CD14-positive monocyte (primary cell): ENCODE measurements at regions of chr5 and their contacts with region 1.

Region 1: DNA sequence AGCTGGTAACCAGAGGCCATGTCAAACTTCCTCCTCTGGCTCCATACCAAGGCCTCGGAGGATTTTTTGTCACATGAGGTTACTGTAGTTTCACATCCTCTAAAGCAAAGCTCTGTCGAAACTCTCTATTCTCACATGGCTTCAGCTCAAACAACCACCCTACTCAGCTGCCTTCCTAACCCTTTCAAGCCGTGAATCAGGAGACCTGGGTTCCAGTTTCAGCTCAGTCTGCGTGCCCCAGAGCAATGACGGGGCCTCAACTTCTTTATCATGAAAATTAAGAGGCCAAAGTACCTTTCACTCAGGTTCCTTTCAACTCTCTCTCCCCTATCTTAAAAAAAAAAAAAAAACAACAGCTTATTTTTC is 145.2 kb upstream of the MAP3K1 start:
- DNase-seq: peak; percentile 97 to 98 (median 97)
- H3K4me3 ChIP-seq: peak overlapping the region in 1 of 3 experiments; percentile 31
- H3K4me3 Mint-ChIP-seq: peak overlapping the region in 1 of 2 donors; percentile 42
- H3K27ac ChIP-seq: peak overlapping the region; percentile 92 to 93
- H3K27ac Mint-ChIP-seq: peak overlapping the region; percentile 95 to 98 (median 97)
- H3K4me1 ChIP-seq: peaks cover 92 to 94% of the 10 kb centered on the region in 2 donors
- H3K4me1 Mint-ChIP-seq: peaks cover 89% of the 10 kb centered on the region
- H3K27me3 ChIP-seq: no peaks in the 10 kb centered on the region
- H3K27me3 Mint-ChIP-seq: peaks cover 0 to 7% (median 0%) of the 10 kb centered on the region in 3 donors
- CTCF ChIP-seq: no peak

Region 2: DNA sequence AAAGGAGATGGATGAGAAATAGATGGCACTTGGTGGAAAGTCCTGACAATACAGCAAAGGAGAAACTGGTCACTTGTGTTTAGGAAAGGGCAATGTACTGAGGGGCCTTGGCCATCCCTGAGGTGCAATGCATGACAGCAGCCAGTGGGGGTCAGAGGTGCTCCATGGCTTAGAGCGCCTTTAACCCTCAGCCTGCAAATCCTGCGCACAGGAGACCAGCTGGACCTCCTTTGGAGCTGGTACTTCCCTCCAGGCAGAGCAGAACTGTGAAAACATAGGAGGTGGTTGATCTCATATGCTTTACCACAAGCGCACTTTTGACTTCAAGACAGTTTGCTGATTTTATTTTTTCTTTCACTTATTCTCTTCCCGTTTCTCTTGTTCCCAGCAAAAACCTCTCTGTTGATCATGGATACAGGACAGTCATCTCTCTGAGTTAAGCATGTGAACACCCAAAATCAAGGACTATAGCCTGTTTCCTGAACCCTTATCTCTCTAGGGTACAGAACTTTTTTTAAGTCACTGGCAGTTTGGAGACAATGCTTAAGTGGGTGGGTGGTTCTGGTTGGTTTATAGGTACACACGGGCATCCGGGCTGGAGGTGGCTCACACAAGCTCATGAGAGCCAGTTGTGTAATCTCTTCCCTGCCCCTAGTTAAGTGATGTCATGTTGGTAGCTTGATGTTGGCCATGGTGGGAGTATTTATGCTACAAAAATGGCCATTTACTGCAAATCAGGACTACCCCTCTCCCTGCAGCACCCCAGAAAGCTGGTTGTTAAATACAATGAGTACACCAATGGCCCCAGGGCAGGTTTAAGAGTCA is 399.3 kb before region 1 on chr5:
- intact Hi-C with region 1: loop called in 1 of 2 experiments (anchors 10 kb)
- DNase-seq: peak; percentile 79 to 83 (median 82)
- H3K4me3 ChIP-seq: no peak overlapping the region
- H3K4me3 Mint-ChIP-seq: peak overlapping the region; percentile 32 to 75
- H3K27ac ChIP-seq: no peak overlapping the region
- H3K27ac Mint-ChIP-seq: peak overlapping the region; percentile 23 to 81 (median 62)
- H3K4me1 ChIP-seq: peaks cover 14 to 16% of the 10 kb centered on the region in 2 donors
- H3K4me1 Mint-ChIP-seq: peaks cover 24% of the 10 kb centered on the region
- H3K27me3 ChIP-seq: no peaks in the 10 kb centered on the region
- H3K27me3 Mint-ChIP-seq: peaks cover 0 to 3% (median 0%) of the 10 kb centered on the region in 3 donors
- CTCF ChIP-seq: peak; percentile 98

Region 3: DNA sequence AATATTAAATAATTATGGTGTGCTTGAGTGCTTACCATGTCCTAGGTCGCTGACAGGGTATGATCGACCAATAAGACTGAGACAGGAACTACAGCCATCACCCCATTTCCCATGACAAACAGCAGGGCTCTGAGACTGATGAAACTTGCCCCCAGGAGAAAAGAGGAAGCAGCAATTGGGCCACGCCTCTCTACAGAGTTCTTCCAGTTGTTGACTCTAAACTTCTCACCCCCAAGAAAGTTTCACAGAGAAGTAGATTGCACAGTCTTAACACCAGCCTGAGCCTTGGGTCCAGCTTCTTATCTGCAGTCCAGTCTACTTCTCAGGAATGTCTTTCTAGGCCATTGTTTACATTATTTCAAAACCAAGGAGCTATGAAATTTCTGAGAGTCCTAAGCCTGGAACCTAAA is 254.7 kb before region 1 on chr5:
- intact Hi-C with region 1: loop called in 1 of 2 experiments (anchors 5 kb)
- DNase-seq: peak; percentile 92 to 98 (median 96)
- H3K4me3 ChIP-seq: peak overlapping the region in 1 of 3 experiments; percentile 56
- H3K4me3 Mint-ChIP-seq: peak overlapping the region in 1 of 2 donors; percentile 73
- H3K27ac ChIP-seq: peak overlapping the region; percentile 95
- H3K27ac Mint-ChIP-seq: peak overlapping the region; percentile 98 to 100 (median 99)
- H3K4me1 ChIP-seq: peaks cover 68 to 80% of the 10 kb centered on the region in 2 donors
- H3K4me1 Mint-ChIP-seq: peaks cover 68% of the 10 kb centered on the region
- H3K27me3 ChIP-seq: no peaks in the 10 kb centered on the region
- H3K27me3 Mint-ChIP-seq: peaks cover 0 to 1% (median 0%) of the 10 kb centered on the region in 3 donors
- CTCF ChIP-seq: no peak

Region 4: GRCh38 chr5:56565644-56566043 is 104.5 kb before region 1 on chr5:
- intact Hi-C with region 1: loop called in 1 of 2 experiments (anchors 5 kb)
- DNase-seq: peak; percentile 75
- H3K4me3 ChIP-seq: peak overlapping the region in 1 of 3 experiments; percentile 55
- H3K4me3 Mint-ChIP-seq: peak overlapping the region in 1 of 2 donors; percentile 69
- H3K27ac ChIP-seq: peak overlapping the region; percentile 57 to 73
- H3K27ac Mint-ChIP-seq: peak overlapping the region; percentile 34 to 88 (median 79)
- H3K4me1 ChIP-seq: peaks cover 59 to 67% of the 10 kb centered on the region in 2 donors
- H3K4me1 Mint-ChIP-seq: peaks cover 61% of the 10 kb centered on the region
- H3K27me3 ChIP-seq: no peaks in the 10 kb centered on the region
- H3K27me3 Mint-ChIP-seq: no peaks in the 10 kb centered on the region
- CTCF ChIP-seq: no peak

Region 5: GRCh38 chr5:56686337-56687195 is 16.5 kb after region 1 on chr5:
- intact Hi-C with region 1: loop called in 1 of 2 experiments (anchors 2 kb)
- DNase-seq: peak; percentile 34 to 50 (median 42)
- H3K4me3 ChIP-seq: peak overlapping the region in 1 of 3 experiments; percentile 58
- H3K4me3 Mint-ChIP-seq: no peak overlapping the region
- H3K27ac ChIP-seq: peak overlapping the region; percentile 59 to 91
- H3K27ac Mint-ChIP-seq: peak overlapping the region; percentile 90 to 97 (median 93)
- H3K4me1 ChIP-seq: peaks cover 42 to 53% of the 10 kb centered on the region in 2 donors
- H3K4me1 Mint-ChIP-seq: peaks cover 57% of the 10 kb centered on the region
- H3K27me3 ChIP-seq: no peaks in the 10 kb centered on the region
- H3K27me3 Mint-ChIP-seq: peaks cover 0 to 3% (median 0%) of the 10 kb centered on the region in 3 donors
- CTCF ChIP-seq: no peak

Region 6: DNA sequence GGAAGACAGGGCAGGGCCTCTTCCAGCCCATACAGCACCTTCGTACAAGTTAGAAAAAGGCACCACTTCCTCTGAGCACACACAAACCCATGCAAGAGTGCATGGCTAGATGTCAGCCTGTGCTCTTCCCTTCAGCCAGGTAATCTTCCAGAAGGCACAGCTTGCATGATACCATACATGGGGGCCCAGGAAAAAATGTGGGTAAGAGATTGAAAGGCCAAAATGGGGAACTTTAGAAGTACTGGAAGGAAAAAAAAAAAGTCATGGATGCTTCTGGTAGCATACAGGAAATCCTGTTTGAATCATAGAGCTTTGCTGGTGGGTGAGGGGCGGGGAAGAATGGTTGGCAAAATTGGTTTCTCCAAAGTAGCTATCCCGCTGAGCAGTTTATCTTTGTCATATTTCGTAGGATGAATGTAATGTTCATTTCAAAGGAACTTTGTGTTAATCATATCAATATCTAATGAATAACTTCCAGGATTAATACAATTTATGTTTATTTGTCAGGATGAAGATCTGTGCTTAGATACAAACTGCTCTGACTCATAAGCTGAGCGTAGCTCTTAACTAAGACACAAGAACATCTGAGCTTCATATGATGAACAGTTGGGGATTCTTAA is 67.0 kb after region 1 on chr5:
- intact Hi-C with region 1: loop called in 1 of 2 experiments (anchors 5 kb)
- DNase-seq: peak; percentile 49 to 77 (median 70)
- H3K4me3 ChIP-seq: peak overlapping the region in 1 of 3 experiments; percentile 48
- H3K4me3 Mint-ChIP-seq: peak overlapping the region; percentile 39 to 72
- H3K27ac ChIP-seq: peak overlapping the region; percentile 63 to 82
- H3K27ac Mint-ChIP-seq: peak overlapping the region; percentile 88 to 99 (median 92)
- H3K4me1 ChIP-seq: peaks cover 49 to 54% of the 10 kb centered on the region in 2 donors
- H3K4me1 Mint-ChIP-seq: peaks cover 66% of the 10 kb centered on the region
- H3K27me3 ChIP-seq: no peaks in the 10 kb centered on the region
- H3K27me3 Mint-ChIP-seq: peaks cover 0 to 6% (median 2%) of the 10 kb centered on the region in 3 donors
- CTCF ChIP-seq: no peak

Region 7: DNA sequence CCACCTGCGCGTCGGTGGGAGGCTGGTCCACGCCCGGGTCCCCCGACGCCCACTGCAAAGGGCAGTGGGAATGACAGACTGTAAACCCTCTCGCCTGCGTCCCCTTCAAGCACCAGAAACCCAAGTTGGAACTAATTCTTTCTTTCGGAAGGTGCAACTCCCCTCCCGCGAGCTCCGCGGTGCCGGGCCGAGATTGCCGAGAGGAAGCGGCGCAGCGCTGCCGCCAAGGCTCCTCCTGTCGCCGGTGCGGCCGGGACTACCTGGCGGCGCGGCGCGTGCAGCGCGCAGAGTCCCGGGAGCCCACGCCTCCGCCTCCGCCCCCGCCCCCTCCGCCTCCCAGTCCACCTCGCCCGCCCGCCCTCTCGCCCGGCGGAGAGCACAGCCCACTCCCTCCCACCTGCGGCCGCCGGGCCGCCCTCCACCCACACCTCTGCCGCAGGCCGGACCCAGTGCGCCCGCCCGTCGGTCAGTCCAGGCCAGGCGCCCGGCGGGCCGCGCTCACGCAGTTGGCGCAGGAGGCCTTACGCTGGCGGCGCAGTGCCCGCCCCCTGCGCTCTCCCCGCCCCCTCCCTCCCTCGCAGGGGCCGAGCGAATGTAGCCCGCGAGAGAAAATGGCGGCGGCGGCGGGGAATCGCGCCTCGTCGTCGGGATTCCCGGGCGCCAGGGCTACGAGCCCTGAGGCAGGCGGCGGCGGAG is 145.0 kb after region 1 on chr5 and contains the start of gene MAP3K1:
- intact Hi-C with region 1: loop called in 1 of 2 experiments (anchors 5 kb)
- DNase-seq: peak; percentile 70 to 76 (median 74)
- H3K4me3 ChIP-seq: peak within 1 kb of the TSS; percentile 67 to 97 (median 87)
- H3K4me3 Mint-ChIP-seq: peak within 1 kb of the TSS; percentile 88 to 97
- H3K27ac ChIP-seq: peak within 1 kb of the TSS; percentile 79 to 89
- H3K27ac Mint-ChIP-seq: peak within 1 kb of the TSS; percentile 91 to 98 (median 94)
- H3K4me1 ChIP-seq: peaks cover 38 to 53% of the 10 kb centered on the region in 2 donors
- H3K4me1 Mint-ChIP-seq: peaks cover 41% of the 10 kb centered on the region
- H3K27me3 ChIP-seq: no peaks in the 10 kb centered on the region
- H3K27me3 Mint-ChIP-seq: no peaks in the 10 kb centered on the region
- CTCF ChIP-seq: peak; percentile 19
- polyA plus RNA-seq, gene MAP3K1: 44.7 to 62.1 (median 45.6) TPM